ENCODE measurements at regions of chr2 and their contacts with region 1.

Region 1: GRCh38 chr2:136378712-136379595 is 261.0 kb upstream of the CXCR4 start:
- DNase-seq: peak; percentile 87
- ATAC-seq: peak; percentile 32
- H3K4me3 Mint-ChIP-seq: no peak overlapping the region
- H3K27ac Mint-ChIP-seq: no peak overlapping the region
- H3K4me1 Mint-ChIP-seq: peaks cover 80% of the 10 kb centered on the region
- H3K27me3 Mint-ChIP-seq: no peaks in the 10 kb centered on the region

Region 2: DNA sequence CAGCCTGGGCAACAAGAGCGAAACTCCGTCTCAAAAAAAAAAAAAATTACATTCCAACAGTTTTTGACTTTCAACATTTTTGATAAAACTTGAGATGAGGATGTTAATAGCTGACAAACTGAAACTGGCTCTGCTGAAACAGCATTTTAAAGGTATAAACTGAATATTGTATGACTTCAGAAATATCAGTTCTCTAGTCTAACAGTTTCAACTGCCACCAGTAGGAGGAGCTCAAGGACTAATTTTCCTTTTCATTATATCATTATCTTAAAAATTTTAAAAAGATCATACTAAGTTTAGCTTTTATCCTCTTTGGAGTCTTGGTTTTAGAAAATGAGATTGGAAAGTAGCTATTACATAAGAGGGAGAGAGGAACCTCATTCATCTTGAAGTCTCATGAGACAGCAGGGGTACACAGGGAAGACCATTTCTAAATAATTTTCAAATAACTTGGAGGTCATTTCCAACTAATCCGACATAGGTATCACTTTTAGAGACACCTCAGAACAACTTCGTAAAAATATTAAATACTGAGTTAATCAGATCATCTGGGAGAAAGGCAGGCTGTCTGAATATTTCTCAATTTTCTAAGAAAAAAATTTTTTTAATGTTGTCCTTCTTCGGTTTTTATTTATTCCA is 465.1 kb before region 1 on chr2:
- CTCF ChIA-PET with region 1: interaction called, 109 read pairs
- DNase-seq: peak; percentile 47
- ATAC-seq: peak; percentile 45
- H3K4me3 Mint-ChIP-seq: no peak overlapping the region
- H3K27ac Mint-ChIP-seq: no peak overlapping the region
- H3K4me1 Mint-ChIP-seq: peaks cover 15% of the 10 kb centered on the region
- H3K27me3 Mint-ChIP-seq: no peaks in the 10 kb centered on the region

Measured in activated CD8-positive, alpha-beta memory T cell treated with anti-CD3 and anti-CD28 coated beads, Interleukin-2, amount 10 ng/mL, durations not matched to agents 7 days and 5 days (primary cell).